Activated T-helper 1 cell treated with anti-CD3 and anti-CD28 coated beads, Interleukin-12 subunit alpha, Interleukin-12 subunit beta, Interleukin-2, Interleukin-4 antibody, amounts not matched to agents 30 ng/mL and 10 ng/mL and 1 ng/mL, durations not matched to agents 14 hours and 24 hours and 36 hours (primary cell): ENCODE measurements at regions of chr1 and their contacts with region 1.

Region 1: GRCh38 chr1:209769171-209769904 is 13.5 kb downstream of the TRAF3IP3 start:
- DNase-seq: peak; percentile 75
- H3K4me3 Mint-ChIP-seq: no peak overlapping the region
- H3K27ac Mint-ChIP-seq: no peak overlapping the region
- H3K4me1 Mint-ChIP-seq: peaks cover 39% of the 10 kb centered on the region
- H3K27me3 Mint-ChIP-seq: no peaks in the 10 kb centered on the region

Region 2: GRCh38 chr1:209607102-209607794 is 162.1 kb before region 1 on chr1:
- intact Hi-C with region 1: loop called (anchors 1 kb)
- DNase-seq: peak; percentile 39
- H3K4me3 Mint-ChIP-seq: no peak overlapping the region
- H3K27ac Mint-ChIP-seq: peak overlapping the region; percentile 66
- H3K4me1 Mint-ChIP-seq: peaks cover 15% of the 10 kb centered on the region
- H3K27me3 Mint-ChIP-seq: no peaks in the 10 kb centered on the region

Region 3: GRCh38 chr1:209648931-209649776 is 120.2 kb before region 1 on chr1:
- intact Hi-C with region 1: no loop called
- DNase-seq: no peak
- H3K4me3 Mint-ChIP-seq: peak overlapping the region; percentile 1
- H3K27ac Mint-ChIP-seq: peak overlapping the region; percentile 10
- H3K4me1 Mint-ChIP-seq: peaks cover 85% of the 10 kb centered on the region
- H3K27me3 Mint-ChIP-seq: no peaks in the 10 kb centered on the region

Region 4: GRCh38 chr1:209755926-209756614 is 13.3 kb before region 1 on chr1 and contains the start of gene TRAF3IP3:
- intact Hi-C with region 1: loop called (anchors 1 kb)
- DNase-seq: peak; percentile 74
- H3K4me3 Mint-ChIP-seq: peak within 1 kb of the TSS; percentile 99
- H3K27ac Mint-ChIP-seq: peak within 1 kb of the TSS; percentile 98
- H3K4me1 Mint-ChIP-seq: peaks cover 80% of the 10 kb centered on the region
- H3K27me3 Mint-ChIP-seq: no peaks in the 10 kb centered on the region
- total RNA-seq, gene TRAF3IP3: 378 and 384 TPM in 2 replicates

Region 5: GRCh38 chr1:209815931-209816341 is 46.6 kb after region 1 on chr1:
- intact Hi-C with region 1: no loop called
- DNase-seq: no peak
- H3K4me3 Mint-ChIP-seq: no peak overlapping the region
- H3K27ac Mint-ChIP-seq: no peak overlapping the region
- H3K4me1 Mint-ChIP-seq: peaks cover 13% of the 10 kb centered on the region
- H3K27me3 Mint-ChIP-seq: peaks cover 11% of the 10 kb centered on the region

Region 6: DNA sequence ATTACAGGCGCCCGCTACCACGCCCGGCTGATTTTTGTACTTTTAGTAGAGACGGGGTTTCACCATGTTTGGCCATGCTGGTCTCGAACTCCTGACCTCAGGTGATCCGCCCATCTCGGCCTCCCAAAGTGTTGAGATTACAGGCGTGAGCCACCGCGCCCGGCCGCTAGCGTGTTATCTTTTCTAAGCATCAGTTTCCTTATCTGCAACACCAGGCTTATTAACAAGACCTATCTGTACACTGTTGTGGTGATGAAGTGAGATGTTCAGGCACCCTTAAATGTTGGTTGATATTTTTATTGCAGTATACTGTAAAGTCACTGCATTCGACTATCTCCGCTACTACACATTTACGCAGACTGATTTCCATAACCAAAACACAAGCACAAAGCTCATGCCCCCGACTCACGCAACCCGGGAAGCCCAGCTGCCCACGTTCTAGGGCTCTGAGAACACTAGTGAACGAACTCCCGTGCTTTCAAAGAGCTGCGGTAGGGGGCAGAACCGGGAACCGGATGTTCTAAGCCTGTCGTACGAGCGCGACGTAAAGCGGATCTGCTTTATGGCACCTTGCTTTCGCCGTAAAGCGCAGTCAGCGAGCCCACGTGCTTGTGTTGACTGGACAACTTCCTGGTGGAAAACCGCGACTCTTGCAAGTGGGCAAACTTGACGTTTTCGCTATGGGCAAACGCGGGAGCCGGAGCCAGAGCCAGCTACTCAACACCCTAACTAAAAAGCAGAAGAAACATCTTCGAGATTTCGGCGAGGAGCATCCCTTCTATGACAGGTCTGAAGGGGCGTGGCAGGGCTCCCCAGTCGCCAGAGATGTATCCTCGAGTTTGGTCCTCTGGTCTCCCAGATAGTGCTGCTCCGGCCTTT is 58.3 kb after region 1 on chr1 and contains the start of gene UTP25:
- intact Hi-C with region 1: loop called (anchors 1 kb)
- DNase-seq: peak; percentile 89
- H3K4me3 Mint-ChIP-seq: peak within 1 kb of the TSS; percentile 93
- H3K27ac Mint-ChIP-seq: peak within 1 kb of the TSS; percentile 90
- H3K4me1 Mint-ChIP-seq: peaks cover 51% of the 10 kb centered on the region
- H3K27me3 Mint-ChIP-seq: peaks cover 9% of the 10 kb centered on the region
- total RNA-seq, gene UTP25: 17.7 and 18.3 TPM in 2 replicates

Region 7: DNA sequence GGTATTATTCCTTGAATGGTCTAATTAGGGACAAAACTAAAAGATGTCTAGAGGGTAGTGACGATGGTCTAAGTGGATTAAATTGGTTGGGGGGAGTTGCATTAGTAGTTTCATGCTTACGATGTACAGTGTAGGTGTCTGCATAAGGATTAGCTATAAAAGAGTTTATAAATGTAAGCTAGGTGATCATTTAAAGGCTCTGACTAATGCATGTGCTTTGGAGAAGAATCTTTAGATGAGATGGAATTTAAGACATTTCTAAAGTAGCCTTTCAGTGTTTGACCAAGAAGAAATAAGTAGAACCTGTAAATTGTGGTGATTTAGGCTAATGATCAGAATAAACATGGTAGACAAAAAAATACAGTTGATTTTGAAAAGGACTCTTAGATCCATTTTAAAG is 176.0 kb after region 1 on chr1:
- intact Hi-C with region 1: no loop called
- DNase-seq: no peak
- H3K4me3 Mint-ChIP-seq: no peak overlapping the region
- H3K27ac Mint-ChIP-seq: no peak overlapping the region
- H3K4me1 Mint-ChIP-seq: no peaks in the 10 kb centered on the region
- H3K27me3 Mint-ChIP-seq: peaks cover 13% of the 10 kb centered on the region

Region 8: DNA sequence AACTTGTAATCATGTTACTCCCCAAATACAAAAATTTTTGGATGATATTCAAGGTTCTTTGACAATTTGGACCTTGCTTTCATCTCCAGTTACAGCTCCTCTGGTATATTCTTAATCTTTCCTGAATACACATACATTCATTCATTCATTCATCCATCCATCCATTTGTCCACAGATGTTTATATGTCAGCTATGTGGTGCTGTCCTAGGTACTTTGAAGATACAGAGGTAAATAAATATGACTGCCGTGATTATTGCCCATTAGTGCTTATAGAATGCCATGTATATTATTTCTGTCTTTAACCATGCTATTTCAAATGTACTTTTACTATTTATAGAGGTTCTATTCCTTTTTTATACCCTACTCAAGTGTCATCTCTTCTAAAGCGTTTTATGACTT is 240.8 kb after region 1 on chr1:
- intact Hi-C with region 1: no loop called
- DNase-seq: no peak
- H3K4me3 Mint-ChIP-seq: no peak overlapping the region
- H3K27ac Mint-ChIP-seq: no peak overlapping the region
- H3K4me1 Mint-ChIP-seq: no peaks in the 10 kb centered on the region
- H3K27me3 Mint-ChIP-seq: peaks cover 7% of the 10 kb centered on the region